HCT116 (cell line): ENCODE measurements at regions of chr1 and their contacts with region 1.

Region 1: DNA sequence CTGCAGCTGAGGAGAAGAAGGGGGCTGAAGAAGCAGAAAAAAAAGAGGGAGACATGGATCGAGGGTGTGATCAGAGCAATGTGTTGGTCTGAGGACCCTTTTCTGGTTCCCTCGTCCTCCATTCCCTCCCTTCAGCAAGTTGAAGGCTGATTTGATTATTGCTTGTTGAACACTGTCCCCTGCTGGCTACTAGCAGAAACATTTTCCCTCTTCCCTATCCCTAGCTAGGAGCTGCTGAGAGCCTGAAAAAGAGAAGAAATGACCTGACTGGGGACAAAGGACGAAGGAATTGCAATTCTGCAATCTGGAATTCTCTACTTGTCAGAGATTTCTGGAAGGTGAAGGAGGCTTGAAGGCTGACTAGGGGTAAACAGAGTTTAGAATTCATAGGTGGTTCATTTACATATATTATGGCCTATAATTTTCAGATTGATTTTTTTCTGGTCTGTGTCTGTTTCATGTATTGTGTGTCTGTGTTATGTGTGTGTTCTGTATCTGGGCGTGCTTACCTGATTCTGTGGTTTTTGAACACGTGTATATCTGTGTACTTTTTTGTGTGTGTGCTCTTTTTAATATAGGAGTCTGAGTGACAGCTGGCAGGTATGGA is 9.8 kb downstream of the NHLH1 start:
- DNase-seq: peak; percentile 61
- ATAC-seq: peak; percentile 92
- H3K4me3 ChIP-seq: no peak overlapping the region
- H3K27ac ChIP-seq: no peak overlapping the region
- H3K4me1 ChIP-seq: peaks cover 0 to 8% of the 10 kb centered on the region in 2 experiments; a peak in 1 of 4 replicates
- H3K27me3 ChIP-seq: no peaks in the 10 kb centered on the region
- CTCF ChIP-seq: peak; percentile 89 to 96 (median 92)
- POLR2A ChIP-seq: no peak
- RAD21 ChIP-seq: peak; percentile 96

Region 2: DNA sequence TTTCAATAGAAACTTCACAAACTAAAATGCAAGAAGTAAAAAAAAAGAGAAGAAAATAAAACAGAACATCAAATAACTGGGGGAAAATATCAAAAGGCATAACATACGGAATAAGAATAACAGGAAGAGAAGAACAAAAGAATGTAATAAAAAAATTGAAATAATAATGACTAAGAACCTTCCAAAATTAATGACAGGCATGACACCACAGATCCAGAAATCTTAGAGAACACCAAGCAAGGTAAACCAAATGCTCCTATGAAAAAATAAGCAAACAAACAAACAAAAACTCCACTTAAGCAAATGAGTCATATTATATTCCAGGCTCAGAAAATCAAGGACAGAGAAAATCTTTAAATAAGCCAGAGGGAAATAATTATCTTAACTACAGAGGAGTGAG is 928.4 kb before region 1 on chr1:
- CTCF ChIA-PET with region 1: no interaction called
- POLR2A ChIA-PET with region 1: no interaction called
- RAD21 ChIA-PET with region 1: no interaction called
- intact Hi-C with region 1: no loop called
- DNase-seq: no peak
- ATAC-seq: no peak
- H3K4me3 ChIP-seq: no peak overlapping the region
- H3K27ac ChIP-seq: no peak overlapping the region
- H3K4me1 ChIP-seq: no peaks in the 10 kb centered on the region
- H3K27me3 ChIP-seq: no peaks in the 10 kb centered on the region
- CTCF ChIP-seq: no peak
- POLR2A ChIP-seq: no peak
- RAD21 ChIP-seq: no peak

Region 3: GRCh38 chr1:160416369-160416768 is 39.7 kb after region 1 on chr1:
- CTCF ChIA-PET with region 1: interaction called, 11 read pairs
- POLR2A ChIA-PET with region 1: no interaction called
- RAD21 ChIA-PET with region 1: interaction called, 3 to 4 read pairs
- intact Hi-C with region 1: loop called (anchors 2 kb)
- DNase-seq: peak; percentile 36
- ATAC-seq: peak; percentile 98
- H3K4me3 ChIP-seq: no peak overlapping the region
- H3K27ac ChIP-seq: no peak overlapping the region
- H3K4me1 ChIP-seq: no peaks in the 10 kb centered on the region
- H3K27me3 ChIP-seq: no peaks in the 10 kb centered on the region
- CTCF ChIP-seq: peak; percentile 64 to 85 (median 75)
- POLR2A ChIP-seq: no peak
- RAD21 ChIP-seq: peak; percentile 94

Region 4: DNA sequence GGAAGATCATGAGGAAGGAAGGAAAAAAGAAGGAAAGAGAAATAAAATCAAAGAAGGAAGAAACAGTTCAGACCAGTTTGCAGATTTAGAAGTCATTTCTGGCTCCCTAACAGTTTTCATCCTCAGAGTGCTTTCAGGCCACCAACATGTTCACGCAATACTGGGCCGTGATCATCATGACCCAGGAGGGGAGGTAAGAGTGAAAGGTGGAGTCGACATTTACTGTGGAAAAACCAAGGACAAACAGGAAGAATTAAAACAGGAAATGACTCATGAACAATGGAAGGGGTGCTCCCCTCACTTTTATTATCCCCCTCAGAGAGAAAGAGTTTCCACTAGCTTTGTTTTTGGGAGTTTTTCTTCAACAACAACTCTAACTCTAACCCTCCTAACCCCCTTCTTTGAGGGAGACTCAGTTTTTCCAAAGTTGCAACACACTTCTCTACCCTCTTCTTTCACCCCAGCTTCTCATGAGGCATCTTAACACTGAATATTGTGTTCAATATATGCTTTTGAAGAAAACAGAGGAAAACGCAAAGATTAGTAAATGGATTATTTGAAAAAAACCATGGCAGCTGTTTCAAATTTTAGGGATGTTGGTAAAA is 84.2 kb after region 1 on chr1:
- CTCF ChIA-PET with region 1: no interaction called
- POLR2A ChIA-PET with region 1: no interaction called
- RAD21 ChIA-PET with region 1: no interaction called
- intact Hi-C with region 1: no loop called
- DNase-seq: no peak
- ATAC-seq: no peak
- H3K4me3 ChIP-seq: no peak overlapping the region
- H3K27ac ChIP-seq: no peak overlapping the region
- H3K4me1 ChIP-seq: peaks cover 2 to 7% of the 10 kb centered on the region in 2 experiments; a peak in 1 of 4 replicates
- H3K27me3 ChIP-seq: no peaks in the 10 kb centered on the region
- CTCF ChIP-seq: no peak
- POLR2A ChIP-seq: no peak
- RAD21 ChIP-seq: no peak